PC-9 (cell line): ENCODE measurements at regions of chr12 and their contacts with region 1.

Region 1: GRCh38 chr12:59936546-59936945 is 340.7 kb downstream of the SLC16A7 start:
- DNase-seq: peak in 1 of 2 experiments; percentile 13
- H3K4me3 ChIP-seq: no peak overlapping the region
- H3K27ac ChIP-seq: no peak overlapping the region
- H3K4me1 ChIP-seq: no peaks in the 10 kb centered on the region
- H3K27me3 ChIP-seq: no peaks in the 10 kb centered on the region
- CTCF ChIP-seq: no peak

Region 2: GRCh38 chr12:60070558-60070957 is 134.0 kb after region 1 on chr12:
- CTCF ChIA-PET with region 1: no interaction called
- POLR2A ChIA-PET with region 1: no interaction called
- intact Hi-C with region 1: loop called (anchors 1 kb)
- DNase-seq: peak in 1 of 2 experiments; percentile 48
- H3K4me3 ChIP-seq: no peak overlapping the region
- H3K27ac ChIP-seq: no peak overlapping the region
- H3K4me1 ChIP-seq: no peaks in the 10 kb centered on the region; the same call in 1 of the 2 replicates
- H3K27me3 ChIP-seq: no peaks in the 10 kb centered on the region
- CTCF ChIP-seq: no peak